K562 (cell line): ENCODE measurements at regions of chr10 and their contacts with region 1.

Region 1: GRCh38 chr10:27558612-27559020 is 54.5 kb downstream of the RAB18 start:
- DNase-seq: peak; percentile 27 to 78 (median 46)
- ATAC-seq: peak; percentile 94
- H3K4me3 ChIP-seq: no peak overlapping the region
- H3K27ac ChIP-seq: no peak overlapping the region
- H3K4me1 ChIP-seq: no peaks in the 10 kb centered on the region
- H3K27me3 ChIP-seq: no peaks in the 10 kb centered on the region; a peak in 1 of 5 replicates
- CTCF ChIP-seq: peak; percentile 74 to 85 (median 75)
- EP300 ChIP-seq: no peak
- POLR2A ChIP-seq: no peak
- RAD21 ChIP-seq: peak; percentile 73 to 84

Region 2: GRCh38 chr10:27542812-27543211 is 15.8 kb before region 1 on chr10:
- CTCF ChIA-PET with region 1: no interaction called
- POLR2A ChIA-PET with region 1: no interaction called
- in situ Hi-C with region 1: no loop called
- intact Hi-C with region 1: no loop called
- DNase-seq: no peak
- ATAC-seq: no peak
- H3K4me3 ChIP-seq: no peak overlapping the region
- H3K27ac ChIP-seq: no peak overlapping the region
- H3K4me1 ChIP-seq: no peaks in the 10 kb centered on the region
- H3K27me3 ChIP-seq: no peaks in the 10 kb centered on the region
- CTCF ChIP-seq: no peak
- EP300 ChIP-seq: no peak
- POLR2A ChIP-seq: no peak
- RAD21 ChIP-seq: no peak

Region 3: DNA sequence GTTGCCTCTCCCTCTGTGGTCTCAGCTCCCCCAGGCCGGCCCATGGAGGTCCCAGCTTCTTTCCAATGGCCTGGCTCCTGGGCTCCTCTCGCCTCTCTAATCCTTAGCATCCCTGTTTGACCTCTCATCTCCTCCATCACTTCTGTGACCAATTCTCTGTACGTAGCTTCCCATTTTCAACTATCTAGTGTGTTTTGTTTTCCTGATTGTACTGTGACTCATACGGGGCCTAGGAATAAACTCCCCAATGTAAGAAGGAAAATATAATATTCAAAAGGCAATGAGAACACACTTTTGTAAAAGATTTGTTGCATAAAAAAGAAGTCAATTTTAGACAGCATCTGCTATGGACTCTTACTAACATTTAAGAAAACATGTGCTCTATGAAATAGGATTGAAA is 96.7 kb after region 1 on chr10:
- CTCF ChIA-PET with region 1: interaction called, 11 read pairs
- POLR2A ChIA-PET with region 1: no interaction called
- in situ Hi-C with region 1: loop called (anchors 10 kb)
- intact Hi-C with region 1: loop called (anchors 1 kb)
- DNase-seq: no peak
- ATAC-seq: no peak
- H3K4me3 ChIP-seq: no peak overlapping the region
- H3K27ac ChIP-seq: no peak overlapping the region
- H3K4me1 ChIP-seq: no peaks in the 10 kb centered on the region
- H3K27me3 ChIP-seq: peaks cover 10 to 15% of the 10 kb centered on the region in 2 experiments; a peak in 4 of 5 replicates
- CTCF ChIP-seq: no peak
- EP300 ChIP-seq: no peak
- POLR2A ChIP-seq: no peak
- RAD21 ChIP-seq: no peak

Region 4: DNA sequence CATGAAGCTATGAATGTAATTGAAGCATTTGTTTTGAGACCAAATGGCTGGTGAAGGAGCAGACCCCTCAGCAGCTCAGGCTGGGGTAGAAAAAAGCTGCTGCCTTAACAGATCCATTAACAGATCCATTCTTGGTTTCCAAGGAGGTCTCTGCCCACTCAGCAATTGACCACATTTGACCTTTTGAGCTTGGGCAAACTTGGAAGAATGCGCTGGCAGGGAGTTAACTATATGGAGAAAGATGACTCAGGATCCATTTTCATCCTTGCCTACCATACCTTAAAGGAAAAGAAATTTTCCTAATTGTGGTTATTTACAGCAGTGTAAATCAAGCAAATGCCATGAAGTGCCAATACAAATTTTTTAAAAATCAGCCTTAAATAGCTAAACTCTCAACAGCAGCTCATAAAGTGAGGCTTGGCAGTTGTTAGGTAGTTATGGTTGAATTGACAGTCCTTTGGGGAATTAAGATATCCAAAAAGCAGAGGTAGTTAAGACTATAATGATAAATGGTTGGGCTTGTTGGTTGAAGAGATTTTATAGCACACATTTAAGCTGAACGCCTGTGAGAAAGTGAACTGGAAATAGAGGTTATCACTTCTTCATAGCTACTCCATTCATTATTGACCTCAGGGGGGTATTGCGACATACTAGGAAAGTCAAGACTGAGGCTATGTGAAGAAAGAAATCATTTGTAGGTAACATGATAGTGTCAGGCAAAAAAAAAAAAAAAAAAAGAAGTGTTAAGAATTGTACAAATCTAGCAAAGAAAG is 103.1 kb after region 1 on chr10:
- CTCF ChIA-PET with region 1: interaction called, 11 read pairs
- POLR2A ChIA-PET with region 1: no interaction called
- in situ Hi-C with region 1: loop called (anchors 10 kb)
- intact Hi-C with region 1: loop called (anchors 1 kb)
- DNase-seq: no peak
- ATAC-seq: no peak
- H3K4me3 ChIP-seq: no peak overlapping the region
- H3K27ac ChIP-seq: no peak overlapping the region
- H3K4me1 ChIP-seq: no peaks in the 10 kb centered on the region
- H3K27me3 ChIP-seq: peaks cover 14 to 18% of the 10 kb centered on the region in 2 experiments; a peak in 4 of 5 replicates
- CTCF ChIP-seq: no peak
- EP300 ChIP-seq: no peak
- POLR2A ChIP-seq: no peak
- RAD21 ChIP-seq: no peak

Region 5: GRCh38 chr10:28179006-28179742 is 620.6 kb after region 1 on chr10:
- CTCF ChIA-PET with region 1: no interaction called
- POLR2A ChIA-PET with region 1: no interaction called
- in situ Hi-C with region 1: loop called (anchors 25 kb)
- intact Hi-C with region 1: loop called (anchors 1 kb)
- DNase-seq: peak; percentile 41 to 65 (median 42)
- ATAC-seq: peak; percentile 78
- H3K4me3 ChIP-seq: no peak overlapping the region
- H3K27ac ChIP-seq: no peak overlapping the region
- H3K4me1 ChIP-seq: no peaks in the 10 kb centered on the region
- H3K27me3 ChIP-seq: no peaks in the 10 kb centered on the region
- CTCF ChIP-seq: peak; percentile 45 to 77 (median 49); a peak in 4 of 6 replicates
- EP300 ChIP-seq: no peak
- POLR2A ChIP-seq: no peak
- RAD21 ChIP-seq: peak; percentile 79 to 81

Region 6: DNA sequence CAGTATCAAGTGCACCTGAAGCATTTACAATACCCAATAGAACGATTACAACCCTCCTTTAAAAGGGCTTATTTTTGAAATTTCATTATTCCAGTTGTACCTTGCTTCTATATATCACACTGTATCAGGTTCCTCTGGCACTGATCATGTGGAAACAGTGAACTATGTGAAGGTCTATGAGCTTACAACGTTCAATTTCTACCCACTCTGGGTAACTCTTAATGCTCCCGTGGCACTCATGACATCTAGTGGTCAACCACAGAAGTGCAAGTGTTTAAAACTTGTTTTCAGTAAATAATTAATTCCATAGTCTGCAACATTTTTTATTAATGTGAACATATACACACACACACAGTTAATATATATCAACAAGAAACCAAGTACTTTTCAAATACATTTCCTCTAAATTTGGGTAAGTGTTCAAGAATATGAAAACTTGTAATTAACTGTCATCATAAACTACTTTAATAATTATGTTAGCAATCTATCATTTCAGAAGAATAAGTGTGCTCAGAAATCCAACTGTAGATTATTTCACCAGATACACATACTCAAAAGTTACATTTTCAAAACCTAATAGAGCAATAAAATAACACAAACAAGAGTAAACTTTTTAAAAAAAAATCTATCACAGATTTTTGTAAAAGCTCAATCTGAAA is 683.3 kb after region 1 on chr10:
- CTCF ChIA-PET with region 1: interaction called, 4 read pairs
- POLR2A ChIA-PET with region 1: no interaction called
- in situ Hi-C with region 1: no loop called
- intact Hi-C with region 1: loop called (anchors 5 kb)
- DNase-seq: peak; percentile 41 to 49 (median 46)
- ATAC-seq: peak; percentile 73
- H3K4me3 ChIP-seq: no peak overlapping the region
- H3K27ac ChIP-seq: no peak overlapping the region
- H3K4me1 ChIP-seq: no peaks in the 10 kb centered on the region
- H3K27me3 ChIP-seq: peaks cover 3 to 4% of the 10 kb centered on the region in 2 experiments; a peak in 4 of 5 replicates
- CTCF ChIP-seq: peak; percentile 55 to 85 (median 77); a peak in 5 of 6 replicates
- EP300 ChIP-seq: no peak
- POLR2A ChIP-seq: no peak
- RAD21 ChIP-seq: peak; percentile 72 to 78